BJ (cell line): ENCODE measurements at regions of chr6 and their contacts with region 1.

Region 1: DNA sequence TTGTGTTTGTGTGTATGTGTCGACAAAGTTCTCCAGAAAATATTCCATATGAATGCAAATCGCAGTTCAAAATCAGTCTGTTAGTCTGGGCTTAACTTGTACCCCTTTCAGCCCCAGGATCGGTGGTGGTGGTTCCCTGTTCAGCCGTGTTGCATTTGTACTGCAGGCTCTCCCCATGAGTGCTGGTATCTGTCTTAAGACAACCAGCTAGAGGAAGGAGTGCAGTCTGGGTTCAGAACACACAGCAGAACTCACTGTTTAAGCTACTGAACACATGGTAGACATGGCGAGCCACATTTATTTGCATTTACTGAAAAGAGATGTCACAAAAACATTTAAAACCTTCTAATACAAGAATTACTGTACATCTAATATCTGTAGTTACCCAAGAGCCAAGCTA is 192.1 kb downstream of the ARID1B start:
- DNase-seq: no peak
- H3K4me3 ChIP-seq: no peak overlapping the region
- H3K27me3 ChIP-seq: no peaks in the 10 kb centered on the region
- CTCF ChIP-seq: no peak

Region 2: DNA sequence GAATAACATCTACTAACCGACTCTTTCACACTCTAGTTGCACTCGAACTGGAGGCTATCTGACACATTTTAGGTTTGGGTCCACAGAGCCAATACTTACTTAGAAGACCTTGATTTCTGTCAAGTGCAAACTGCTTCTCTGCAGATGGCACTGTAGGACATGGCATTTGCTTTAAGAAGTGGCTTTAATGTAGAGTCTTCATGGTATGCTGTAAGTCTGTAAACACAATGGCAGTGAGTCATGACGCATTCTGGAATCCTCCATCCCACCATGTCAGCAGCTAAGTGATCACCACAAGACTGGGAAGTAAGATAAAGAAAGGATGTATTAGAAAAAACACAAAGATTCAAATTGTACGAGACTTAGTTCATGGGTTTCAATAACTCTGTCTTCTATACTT is 1136.6 kb before region 1 on chr6:
- CTCF ChIA-PET with region 1: no interaction called
- POLR2A ChIA-PET with region 1: interaction called, 17 read pairs
- DNase-seq: no peak
- H3K4me3 ChIP-seq: no peak overlapping the region
- H3K27me3 ChIP-seq: no peaks in the 10 kb centered on the region
- CTCF ChIP-seq: no peak

Region 3: DNA sequence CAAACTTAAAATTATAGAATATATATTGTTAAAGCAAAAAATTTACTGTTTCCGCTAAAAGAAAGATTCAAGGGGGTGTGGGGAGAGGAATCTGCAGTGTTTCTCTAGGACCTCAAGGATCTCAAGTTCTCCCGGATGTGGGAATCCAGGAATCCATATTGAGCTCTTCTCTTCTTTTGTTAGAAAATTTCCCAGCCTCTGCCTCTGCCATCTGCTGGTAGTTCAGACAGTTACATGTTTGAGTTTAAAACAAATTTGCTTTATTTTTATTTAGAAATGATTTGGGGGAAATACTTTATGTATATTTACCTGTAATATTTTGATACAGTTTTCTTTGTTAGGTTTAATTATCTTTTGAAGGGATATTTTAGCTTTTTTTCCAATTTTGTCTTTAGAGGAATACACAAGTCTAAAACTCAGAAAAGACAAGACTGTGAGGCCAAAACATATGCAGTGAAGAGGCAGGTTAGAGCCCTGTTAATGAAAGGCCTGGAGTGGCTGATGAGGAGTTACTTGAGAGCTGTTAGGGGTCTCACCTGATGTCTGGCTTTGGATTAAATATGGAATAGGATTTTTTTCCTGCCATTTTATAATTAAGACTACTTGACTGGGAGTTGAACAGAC is 76.7 kb after region 1 on chr6:
- CTCF ChIA-PET with region 1: no interaction called
- POLR2A ChIA-PET with region 1: no interaction called
- DNase-seq: no peak
- H3K4me3 ChIP-seq: no peak overlapping the region
- H3K27me3 ChIP-seq: no peaks in the 10 kb centered on the region
- CTCF ChIP-seq: peak; percentile 70

Region 4: GRCh38 chr6:157056275-157056674 is 87.0 kb after region 1 on chr6:
- CTCF ChIA-PET with region 1: no interaction called
- POLR2A ChIA-PET with region 1: no interaction called
- DNase-seq: no peak
- H3K4me3 ChIP-seq: no peak overlapping the region
- H3K27me3 ChIP-seq: no peaks in the 10 kb centered on the region
- CTCF ChIP-seq: no peak